CD8-positive, alpha-beta T cell (primary cell): ENCODE measurements at regions of chr1 and their contacts with region 1.

Region 1: GRCh38 chr1:212608209-212608955 is at the start of gene ATF3:
- DNase-seq: peak; percentile 62 to 91 (median 78)
- ATAC-seq: peak; percentile 73
- H3K4me3 ChIP-seq: peak within 1 kb of the TSS; percentile 75 to 86
- H3K4me3 Mint-ChIP-seq: peak within 1 kb of the TSS; percentile 94
- H3K27ac ChIP-seq: peak within 1 kb of the TSS in 1 of 2 experiments; percentile 31
- H3K27ac Mint-ChIP-seq: peak within 1 kb of the TSS; percentile 83
- H3K4me1 ChIP-seq: peaks cover 25% of the 10 kb centered on the region
- H3K4me1 Mint-ChIP-seq: peaks cover 22% of the 10 kb centered on the region
- H3K27me3 ChIP-seq: peaks cover 39 to 56% of the 10 kb centered on the region in 2 experiments
- H3K27me3 Mint-ChIP-seq: peaks cover 54% of the 10 kb centered on the region
- CTCF ChIP-seq: no peak
- total RNA-seq, gene ATF3: 8.9 to 10.4 TPM

Region 2: GRCh38 chr1:212514056-212514614 is 94.2 kb before region 1 on chr1:
- CTCF ChIA-PET with region 1: no interaction called
- POLR2A ChIA-PET with region 1: no interaction called
- intact Hi-C with region 1: no loop called
- DNase-seq: peak in 4 of 9 experiments; percentile 8 to 37 (median 16)
- ATAC-seq: peak; percentile 34
- H3K4me3 ChIP-seq: no peak overlapping the region
- H3K4me3 Mint-ChIP-seq: peak overlapping the region; percentile 49
- H3K27ac ChIP-seq: no peak overlapping the region
- H3K27ac Mint-ChIP-seq: no peak overlapping the region
- H3K4me1 ChIP-seq: peaks cover 6% of the 10 kb centered on the region
- H3K4me1 Mint-ChIP-seq: peaks cover 12% of the 10 kb centered on the region
- H3K27me3 ChIP-seq: peaks cover 15 to 21% of the 10 kb centered on the region in 2 experiments
- H3K27me3 Mint-ChIP-seq: peaks cover 49% of the 10 kb centered on the region
- CTCF ChIP-seq: no peak

Region 3: GRCh38 chr1:212566522-212567479 is 41.6 kb before region 1 on chr1:
- CTCF ChIA-PET with region 1: no interaction called
- POLR2A ChIA-PET with region 1: no interaction called
- intact Hi-C with region 1: loop called in 1 of 2 experiments (anchors 2 kb)
- DNase-seq: peak in 8 of 9 experiments; percentile 32 to 79 (median 59)
- ATAC-seq: peak; percentile 99
- H3K4me3 ChIP-seq: peak overlapping the region; percentile 59 to 67
- H3K4me3 Mint-ChIP-seq: peak overlapping the region; percentile 86
- H3K27ac ChIP-seq: peak overlapping the region; percentile 30 to 38
- H3K27ac Mint-ChIP-seq: peak overlapping the region; percentile 62
- H3K4me1 ChIP-seq: peaks cover 7% of the 10 kb centered on the region
- H3K4me1 Mint-ChIP-seq: peaks cover 16% of the 10 kb centered on the region
- H3K27me3 ChIP-seq: no peaks in the 10 kb centered on the region
- H3K27me3 Mint-ChIP-seq: no peaks in the 10 kb centered on the region
- CTCF ChIP-seq: no peak

Region 4: DNA sequence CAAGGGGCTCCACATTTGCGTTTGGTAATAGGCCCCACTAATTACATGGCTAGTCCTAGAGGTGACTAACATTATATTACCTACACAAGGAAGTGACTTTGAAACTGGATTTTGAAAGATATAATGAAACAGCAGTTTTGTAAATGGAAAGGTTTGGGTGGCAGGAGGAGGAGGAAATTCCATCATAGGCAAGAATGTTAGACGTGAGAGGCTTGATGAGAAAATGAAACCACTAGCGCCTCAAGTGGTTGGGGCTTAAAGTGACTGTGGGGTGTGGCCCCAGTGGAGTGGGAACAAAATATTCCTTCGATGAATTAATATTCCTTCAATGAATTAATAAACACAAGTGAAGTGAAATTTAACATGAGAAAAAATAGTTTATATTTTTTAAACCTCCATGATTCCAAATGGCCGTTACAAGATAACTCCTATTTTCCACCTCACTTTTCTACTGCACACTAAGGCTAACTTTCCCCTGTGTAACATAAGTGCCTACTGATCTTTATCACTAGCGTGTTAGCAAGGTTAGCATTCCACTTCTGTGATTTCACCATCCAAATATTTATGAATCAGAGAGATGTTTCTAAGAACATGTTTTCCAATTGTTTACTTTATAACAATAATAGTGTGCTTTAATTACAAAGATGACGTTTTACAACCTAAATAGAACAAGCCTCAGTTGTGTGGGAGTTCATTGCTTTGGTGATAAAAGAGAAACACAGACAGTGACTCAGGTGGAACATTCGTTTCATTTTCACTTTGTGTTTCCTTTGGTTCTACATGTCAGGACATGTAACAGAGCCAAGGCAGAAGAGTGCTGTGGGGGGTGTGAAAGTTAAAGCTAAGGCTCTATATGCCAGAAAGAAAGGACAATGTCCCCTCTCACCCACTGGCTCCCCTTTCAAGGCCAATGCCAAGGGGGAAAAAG is 12.3 kb before region 1 on chr1:
- CTCF ChIA-PET with region 1: no interaction called
- POLR2A ChIA-PET with region 1: interaction called, 6 read pairs
- intact Hi-C with region 1: loop called in 1 of 2 experiments (anchors 1 kb)
- DNase-seq: peak in 5 of 9 experiments; percentile 11 to 82 (median 47)
- ATAC-seq: peak; percentile 91
- H3K4me3 ChIP-seq: peak overlapping the region; percentile 9 to 15
- H3K4me3 Mint-ChIP-seq: peak overlapping the region; percentile 68
- H3K27ac ChIP-seq: peak overlapping the region; percentile 26 to 51
- H3K27ac Mint-ChIP-seq: peak overlapping the region; percentile 68
- H3K4me1 ChIP-seq: peaks cover 11% of the 10 kb centered on the region
- H3K4me1 Mint-ChIP-seq: peaks cover 14% of the 10 kb centered on the region
- H3K27me3 ChIP-seq: no peaks in the 10 kb centered on the region
- H3K27me3 Mint-ChIP-seq: peaks cover 11% of the 10 kb centered on the region
- CTCF ChIP-seq: peak; percentile 44